Dendritic cell treated with granulocyte-macrophage colony-stimulating factor and Interleukin-4, amounts not matched to agents 40 ng/mL and 50 ng/mL, for 4 days (primary cell): ENCODE measurements at regions of chr10 and their contacts with region 1.

Region 1: DNA sequence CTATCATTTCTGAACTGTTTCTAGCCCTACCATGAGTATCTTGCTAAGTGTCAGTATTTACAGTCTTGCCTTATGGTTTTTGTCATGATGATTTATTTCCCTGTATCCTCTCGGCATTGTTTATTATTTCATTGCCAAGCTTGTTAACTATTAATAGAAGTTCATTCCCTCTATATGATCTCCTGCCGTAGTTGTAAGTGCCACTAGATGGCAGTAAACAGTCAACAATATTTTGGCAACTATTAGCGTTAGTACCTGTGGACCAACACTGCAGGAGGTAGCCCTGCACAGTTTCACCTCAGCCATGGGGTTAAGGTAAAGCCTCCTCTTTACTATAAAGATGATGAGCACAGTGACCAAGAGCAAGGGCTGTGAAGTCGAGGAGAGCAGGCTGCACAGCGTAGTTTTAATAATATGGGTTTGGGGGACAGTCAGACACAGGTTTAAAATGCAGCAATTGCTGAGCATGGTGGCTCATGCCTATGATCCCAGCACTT is 26.1 kb upstream of the CCNJ start:
- H3K4me3 Mint-ChIP-seq: no peak overlapping the region
- H3K27ac Mint-ChIP-seq: no peak overlapping the region
- H3K4me1 Mint-ChIP-seq: no peaks in the 10 kb centered on the region
- H3K27me3 Mint-ChIP-seq: no peaks in the 10 kb centered on the region

Region 2: DNA sequence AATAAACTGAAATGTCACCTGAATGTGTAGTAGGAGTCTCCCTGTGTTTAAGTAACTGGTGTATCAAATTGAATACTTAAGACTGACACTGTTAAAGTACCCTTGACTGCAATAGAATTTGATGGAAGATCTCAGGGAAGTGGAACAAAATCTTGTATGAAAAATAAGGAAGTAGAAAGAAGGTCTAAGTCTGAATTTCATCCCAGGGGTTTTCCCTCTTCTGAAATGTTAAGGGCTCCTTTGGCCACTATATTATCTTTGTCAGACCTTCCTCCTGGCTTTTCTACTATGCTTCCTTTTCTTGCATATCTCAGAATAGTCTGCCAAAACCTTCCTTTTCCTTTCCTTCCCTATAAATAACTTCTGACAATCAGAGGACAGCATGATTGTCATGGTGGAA is 194.5 kb after region 1 on chr10:
- intact Hi-C with region 1: loop called (anchors 10 kb)
- H3K4me3 Mint-ChIP-seq: no peak overlapping the region
- H3K27ac Mint-ChIP-seq: no peak overlapping the region
- H3K4me1 Mint-ChIP-seq: peaks cover 8% of the 10 kb centered on the region
- H3K27me3 Mint-ChIP-seq: no peaks in the 10 kb centered on the region

Region 3: GRCh38 chr10:96339957-96340904 is 323.0 kb after region 1 on chr10:
- intact Hi-C with region 1: loop called (anchors 2 kb)
- H3K4me3 Mint-ChIP-seq: no peak overlapping the region
- H3K27ac Mint-ChIP-seq: no peak overlapping the region
- H3K4me1 Mint-ChIP-seq: peaks cover 10% of the 10 kb centered on the region
- H3K27me3 Mint-ChIP-seq: no peaks in the 10 kb centered on the region